ENCODE measurements at regions of chr11 and their contacts with region 1.

Region 1: GRCh38 chr11:46832511-46833214 is 13.4 kb downstream of the CKAP5 start:
- DNase-seq: no peak
- ATAC-seq: no peak
- H3K4me3 Mint-ChIP-seq: no peak overlapping the region
- H3K27ac Mint-ChIP-seq: no peak overlapping the region
- H3K4me1 Mint-ChIP-seq: peaks cover 16% of the 10 kb centered on the region
- H3K27me3 Mint-ChIP-seq: no peaks in the 10 kb centered on the region

Region 2: DNA sequence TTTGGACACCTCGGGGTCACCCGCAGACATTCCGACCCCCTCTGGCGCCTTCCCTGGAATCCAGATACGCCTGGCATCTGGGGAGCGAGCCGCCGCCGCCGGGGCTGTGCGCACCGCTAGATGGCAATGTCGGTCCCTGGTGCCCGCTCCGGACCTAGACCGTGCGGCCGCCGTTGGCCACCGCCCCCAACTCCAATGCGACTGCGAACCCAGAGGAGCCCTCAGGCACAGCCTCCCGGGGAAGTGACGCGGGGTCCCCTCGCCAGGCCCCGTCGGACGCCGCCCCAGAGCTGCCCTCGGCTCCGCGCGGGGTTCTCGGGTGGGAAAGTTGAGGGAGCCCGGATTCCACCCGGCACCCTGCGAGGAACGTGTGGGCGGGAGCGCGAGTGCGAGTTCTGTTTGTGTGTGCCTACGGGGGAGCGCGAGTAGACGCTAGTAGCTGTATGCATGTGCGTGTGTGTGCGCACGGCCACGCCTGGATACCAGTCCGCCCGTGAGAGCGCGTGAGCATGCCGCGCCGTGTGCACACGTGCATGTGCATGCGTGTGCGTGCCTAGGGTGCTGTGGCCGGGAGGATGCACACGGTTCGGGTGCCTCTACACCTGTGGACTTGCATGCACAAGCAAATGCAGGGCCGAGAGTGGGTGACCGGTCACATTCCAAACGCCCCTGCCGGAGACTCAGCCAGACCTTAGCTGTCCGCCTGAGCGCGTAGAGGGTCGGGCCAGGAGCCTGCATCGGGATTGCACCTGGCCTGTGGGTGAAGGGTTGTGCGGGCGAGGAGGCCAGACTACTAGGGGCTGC is 443.0 kb before region 1 on chr11:
- CTCF ChIA-PET with region 1: no interaction called
- POLR2A ChIA-PET with region 1: no interaction called
- intact Hi-C with region 1: no loop called
- DNase-seq: peak; percentile 81
- ATAC-seq: peak; percentile 66
- H3K4me3 Mint-ChIP-seq: peak overlapping the region; percentile 50
- H3K27ac Mint-ChIP-seq: no peak overlapping the region
- H3K4me1 Mint-ChIP-seq: peaks cover 22% of the 10 kb centered on the region
- H3K27me3 Mint-ChIP-seq: peaks cover 56% of the 10 kb centered on the region

Region 3: DNA sequence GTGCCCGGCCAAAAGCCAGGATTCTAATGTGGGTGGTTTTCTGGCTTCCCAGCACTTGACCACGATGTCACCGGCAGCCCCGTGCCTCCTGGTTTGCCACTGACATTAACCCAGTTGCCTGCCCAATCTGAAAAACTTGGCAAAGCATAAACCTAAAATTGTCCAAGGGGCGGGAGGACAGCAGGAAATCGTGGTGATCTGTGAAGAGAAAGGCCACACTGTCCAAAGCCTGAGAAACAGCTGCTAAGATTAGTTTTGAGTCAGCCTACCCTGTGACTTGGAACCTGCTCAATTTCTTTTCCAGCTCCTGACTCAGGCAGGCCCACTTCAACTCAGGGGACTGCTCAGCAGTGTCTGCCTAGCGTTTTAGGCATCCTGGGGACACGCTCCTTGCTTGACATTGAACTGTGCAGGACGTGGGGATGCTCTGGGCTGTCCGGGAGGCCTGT is 121.8 kb before region 1 on chr11:
- CTCF ChIA-PET with region 1: no interaction called
- POLR2A ChIA-PET with region 1: no interaction called
- intact Hi-C with region 1: no loop called
- DNase-seq: no peak
- ATAC-seq: no peak
- H3K4me3 Mint-ChIP-seq: no peak overlapping the region
- H3K27ac Mint-ChIP-seq: no peak overlapping the region
- H3K4me1 Mint-ChIP-seq: no peaks in the 10 kb centered on the region
- H3K27me3 Mint-ChIP-seq: no peaks in the 10 kb centered on the region

Region 4: DNA sequence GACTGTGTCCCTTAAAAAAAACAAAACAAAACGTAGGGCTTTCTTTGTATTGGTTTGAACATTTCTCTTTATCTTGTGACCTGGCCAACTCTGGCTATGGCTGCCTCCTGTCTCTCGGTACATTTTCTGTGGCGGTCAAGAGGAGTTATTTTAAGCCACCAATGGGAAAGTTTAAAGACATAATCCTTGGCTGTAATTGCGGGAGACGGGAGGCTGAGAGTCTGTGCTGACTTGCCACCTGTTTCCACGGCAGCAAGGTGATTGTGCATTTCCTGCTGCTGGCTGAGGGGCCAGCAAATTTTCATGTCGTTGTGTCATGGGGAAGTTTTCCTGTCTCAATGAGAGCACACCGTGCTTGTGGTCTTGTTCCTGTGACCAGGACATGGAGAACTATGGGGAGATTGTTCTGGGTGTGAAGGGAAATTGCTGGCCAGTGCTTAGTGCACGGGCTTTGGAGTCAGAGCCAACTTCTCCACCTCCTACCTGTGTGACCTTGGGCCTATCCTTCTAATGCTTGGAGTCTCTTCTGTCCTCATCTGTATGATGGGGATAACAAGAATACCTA is 1158.7 kb after region 1 on chr11:
- CTCF ChIA-PET with region 1: no interaction called
- POLR2A ChIA-PET with region 1: no interaction called
- intact Hi-C with region 1: loop called in 1 of 2 experiments (anchors 5 kb)
- DNase-seq: peak; percentile 44
- ATAC-seq: peak; percentile 53
- H3K4me3 Mint-ChIP-seq: peak overlapping the region; percentile 34
- H3K27ac Mint-ChIP-seq: peak overlapping the region; percentile 40
- H3K4me1 Mint-ChIP-seq: peaks cover 53% of the 10 kb centered on the region
- H3K27me3 Mint-ChIP-seq: no peaks in the 10 kb centered on the region

Measured in activated CD4-positive, alpha-beta T cell treated with anti-CD3 and anti-CD28 coated beads for 36 hours (primary cell).